PC-3 (cell line): ENCODE measurements at regions of chr7 and their contacts with region 1.

Region 1: DNA sequence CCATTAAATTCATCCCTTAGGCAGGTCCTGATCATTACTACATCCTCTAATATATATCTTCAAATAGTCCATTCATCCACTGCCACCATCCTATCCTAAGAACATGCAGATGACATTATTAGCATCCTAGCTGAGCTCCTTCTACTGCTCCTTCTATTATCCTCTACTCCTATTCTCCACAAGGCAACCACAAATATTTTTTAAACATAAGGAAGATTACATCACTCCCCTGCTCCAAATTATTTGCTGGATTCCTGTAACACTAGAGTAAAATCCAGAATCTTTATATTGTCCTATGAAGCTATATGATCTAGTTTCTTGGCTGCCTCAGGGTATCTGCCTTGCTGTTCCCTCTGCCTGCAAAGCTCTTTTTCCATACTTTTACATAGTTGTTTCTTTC is 176.3 kb upstream of the SLC26A5 start:
- DNase-seq: no peak
- ATAC-seq: no peak
- H3K4me3 ChIP-seq: no peak overlapping the region
- H3K27ac ChIP-seq: no peak overlapping the region
- H3K4me1 ChIP-seq: no peaks in the 10 kb centered on the region
- H3K27me3 ChIP-seq: no peaks in the 10 kb centered on the region
- CTCF ChIP-seq: no peak

Region 2: DNA sequence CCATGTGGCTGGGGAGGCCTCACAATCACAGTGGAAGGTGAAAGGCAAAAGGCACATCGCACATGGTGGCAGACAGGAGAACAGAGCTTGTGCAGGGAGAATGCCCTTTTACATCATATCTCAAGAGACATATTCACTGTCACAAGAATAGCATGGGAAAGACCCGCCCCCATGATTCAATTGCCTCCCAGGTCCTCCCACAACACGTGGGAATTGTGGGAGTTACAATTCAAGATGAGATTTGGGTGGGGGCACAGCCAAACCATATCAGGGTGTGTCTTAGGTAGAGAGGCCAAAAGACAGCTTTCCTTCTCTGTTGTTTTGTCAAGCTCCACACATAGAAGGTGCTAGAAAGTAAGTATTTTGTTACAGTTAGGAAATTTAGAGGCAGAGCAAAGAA is 155.5 kb before region 1 on chr7:
- CTCF ChIA-PET with region 1: no interaction called
- POLR2A ChIA-PET with region 1: interaction called, 11 read pairs
- intact Hi-C with region 1: no loop called
- DNase-seq: no peak
- ATAC-seq: no peak
- H3K4me3 ChIP-seq: no peak overlapping the region
- H3K27ac ChIP-seq: no peak overlapping the region
- H3K4me1 ChIP-seq: no peaks in the 10 kb centered on the region
- H3K27me3 ChIP-seq: no peaks in the 10 kb centered on the region
- CTCF ChIP-seq: no peak

Region 3: DNA sequence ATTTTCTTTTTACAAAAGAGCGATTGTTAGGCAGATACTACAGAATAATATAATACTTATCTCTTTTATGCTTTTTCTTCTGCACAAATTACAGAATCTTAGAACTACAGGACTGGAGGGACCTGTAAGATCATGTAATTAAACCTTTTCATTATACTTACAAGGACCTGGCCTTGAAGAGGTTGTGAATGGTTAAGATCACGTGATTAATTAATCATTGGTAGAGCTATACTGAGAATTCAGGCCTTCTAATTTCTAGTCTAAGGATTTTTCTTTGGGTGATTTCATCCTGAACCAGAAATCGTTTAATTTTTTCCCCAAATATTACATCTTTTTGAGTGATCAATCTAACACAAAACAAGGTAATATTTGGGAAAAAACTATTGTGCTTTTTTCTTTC is 12.5 kb before region 1 on chr7:
- CTCF ChIA-PET with region 1: no interaction called
- POLR2A ChIA-PET with region 1: no interaction called
- intact Hi-C with region 1: loop called (anchors 2 kb)
- DNase-seq: no peak
- ATAC-seq: no peak
- H3K4me3 ChIP-seq: no peak overlapping the region
- H3K27ac ChIP-seq: no peak overlapping the region
- H3K4me1 ChIP-seq: no peaks in the 10 kb centered on the region
- H3K27me3 ChIP-seq: no peaks in the 10 kb centered on the region
- CTCF ChIP-seq: no peak

Region 4: GRCh38 chr7:103637094-103637493 is 14.8 kb after region 1 on chr7:
- CTCF ChIA-PET with region 1: no interaction called
- POLR2A ChIA-PET with region 1: no interaction called
- intact Hi-C with region 1: no loop called
- DNase-seq: peak; percentile 88
- ATAC-seq: peak; percentile 77
- H3K4me3 ChIP-seq: peak overlapping the region; percentile 8; the same call in 1 of the 2 replicates
- H3K27ac ChIP-seq: peak overlapping the region; percentile 97
- H3K4me1 ChIP-seq: peaks cover 67% of the 10 kb centered on the region
- H3K27me3 ChIP-seq: no peaks in the 10 kb centered on the region
- CTCF ChIP-seq: no peak